Activated CD8-positive, alpha-beta T cell treated with anti-CD3 and anti-CD28 coated beads for 36 hours (primary cell): ENCODE measurements at regions of chr16 and their contacts with region 1.

Region 1: GRCh38 chr16:74563828-74564263 is 43.1 kb downstream of the GLG1 start:
- DNase-seq: peak; percentile 55
- ATAC-seq: peak; percentile 78
- H3K4me3 Mint-ChIP-seq: no peak overlapping the region
- H3K27ac Mint-ChIP-seq: peak overlapping the region; percentile 64
- H3K4me1 Mint-ChIP-seq: peaks cover 79% of the 10 kb centered on the region
- H3K27me3 Mint-ChIP-seq: no peaks in the 10 kb centered on the region
- CTCF ChIP-seq: no peak

Region 2: GRCh38 chr16:74521691-74522090 is 42.2 kb before region 1 on chr16:
- CTCF ChIA-PET with region 1: no interaction called
- POLR2A ChIA-PET with region 1: no interaction called
- intact Hi-C with region 1: no loop called
- DNase-seq: no peak
- ATAC-seq: no peak
- H3K4me3 Mint-ChIP-seq: no peak overlapping the region
- H3K27ac Mint-ChIP-seq: no peak overlapping the region
- H3K4me1 Mint-ChIP-seq: peaks cover 19% of the 10 kb centered on the region
- H3K27me3 Mint-ChIP-seq: no peaks in the 10 kb centered on the region
- CTCF ChIP-seq: no peak

Region 3: DNA sequence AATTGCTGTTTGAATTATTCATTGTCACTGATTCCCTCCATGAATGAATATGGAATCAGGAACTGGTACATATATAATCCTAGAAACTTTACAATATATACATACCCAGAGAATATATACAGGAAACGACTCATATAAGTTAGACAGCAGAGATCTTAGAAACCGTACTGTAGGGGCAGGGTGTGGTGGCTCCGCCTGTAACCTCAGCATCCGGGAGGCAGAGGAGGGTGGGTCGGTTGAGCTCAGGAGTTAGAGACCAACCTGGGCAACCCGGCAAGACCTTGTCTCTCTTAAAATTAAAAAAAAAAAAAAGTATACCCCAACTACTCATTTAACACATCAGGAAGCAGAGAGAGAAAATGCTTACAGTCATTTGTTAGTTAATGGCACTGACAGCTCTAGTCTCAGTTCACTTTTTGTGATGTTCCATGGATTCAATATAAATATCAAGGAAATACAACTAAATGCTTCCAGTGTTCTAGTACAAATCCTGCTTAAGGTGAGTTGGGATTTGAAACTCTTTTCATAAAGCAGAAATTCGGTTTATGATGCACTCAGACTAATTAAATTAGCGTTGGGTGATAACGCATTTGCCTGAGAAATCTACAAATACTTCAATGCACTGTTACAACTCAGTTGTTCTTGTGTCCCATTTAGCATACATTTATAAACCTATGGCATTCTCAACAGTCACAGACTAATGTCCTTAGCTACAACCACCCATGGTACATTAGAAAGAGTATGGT is 37.5 kb after region 1 on chr16:
- CTCF ChIA-PET with region 1: no interaction called
- POLR2A ChIA-PET with region 1: interaction called, 3 read pairs
- intact Hi-C with region 1: loop called (anchors 5 kb)
- DNase-seq: peak; percentile 85
- ATAC-seq: peak; percentile 93
- H3K4me3 Mint-ChIP-seq: peak overlapping the region; percentile 37
- H3K27ac Mint-ChIP-seq: peak overlapping the region; percentile 86
- H3K4me1 Mint-ChIP-seq: peaks cover 61% of the 10 kb centered on the region
- H3K27me3 Mint-ChIP-seq: no peaks in the 10 kb centered on the region
- CTCF ChIP-seq: no peak